ENCODE measurements at regions of chr22 and their contacts with region 1.

Region 1: DNA sequence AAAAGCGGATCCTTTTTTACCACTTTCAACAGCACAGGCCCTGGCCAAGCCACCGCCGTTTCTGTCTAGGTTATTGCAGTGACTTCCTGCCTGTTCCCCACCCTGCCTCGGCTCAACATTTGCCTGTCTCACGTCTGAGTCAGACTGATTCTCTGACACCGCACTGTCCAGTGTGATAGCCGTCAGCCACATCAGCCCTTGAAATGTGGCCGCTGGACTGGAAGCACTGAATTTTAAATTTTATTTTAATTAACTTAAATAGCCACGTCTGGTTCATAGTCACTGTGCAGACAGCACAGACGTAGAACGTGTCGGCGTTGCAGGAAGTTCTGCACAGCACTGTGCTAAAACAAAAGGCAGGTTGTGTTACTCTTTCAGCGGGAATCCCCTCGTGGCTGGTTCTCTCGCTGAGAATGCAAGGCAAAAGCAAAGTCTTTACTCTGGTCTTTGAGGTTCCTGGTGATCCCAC is 56.3 kb upstream of the ADSL start:
- DNase-seq: peak; percentile 49 to 90 (median 70)
- ATAC-seq: peak; percentile 85
- H3K4me3 ChIP-seq: peak overlapping the region; percentile 2
- H3K4me3 Mint-ChIP-seq: peak overlapping the region; percentile 70
- H3K27ac ChIP-seq: peak overlapping the region; percentile 83 to 94
- H3K27ac Mint-ChIP-seq: peak overlapping the region; percentile 98
- H3K4me1 ChIP-seq: peaks cover 44% of the 10 kb centered on the region
- H3K4me1 Mint-ChIP-seq: peaks cover 65% of the 10 kb centered on the region
- H3K27me3 ChIP-seq: no peaks in the 10 kb centered on the region
- H3K27me3 Mint-ChIP-seq: no peaks in the 10 kb centered on the region
- CTCF ChIP-seq: no peak

Region 2: DNA sequence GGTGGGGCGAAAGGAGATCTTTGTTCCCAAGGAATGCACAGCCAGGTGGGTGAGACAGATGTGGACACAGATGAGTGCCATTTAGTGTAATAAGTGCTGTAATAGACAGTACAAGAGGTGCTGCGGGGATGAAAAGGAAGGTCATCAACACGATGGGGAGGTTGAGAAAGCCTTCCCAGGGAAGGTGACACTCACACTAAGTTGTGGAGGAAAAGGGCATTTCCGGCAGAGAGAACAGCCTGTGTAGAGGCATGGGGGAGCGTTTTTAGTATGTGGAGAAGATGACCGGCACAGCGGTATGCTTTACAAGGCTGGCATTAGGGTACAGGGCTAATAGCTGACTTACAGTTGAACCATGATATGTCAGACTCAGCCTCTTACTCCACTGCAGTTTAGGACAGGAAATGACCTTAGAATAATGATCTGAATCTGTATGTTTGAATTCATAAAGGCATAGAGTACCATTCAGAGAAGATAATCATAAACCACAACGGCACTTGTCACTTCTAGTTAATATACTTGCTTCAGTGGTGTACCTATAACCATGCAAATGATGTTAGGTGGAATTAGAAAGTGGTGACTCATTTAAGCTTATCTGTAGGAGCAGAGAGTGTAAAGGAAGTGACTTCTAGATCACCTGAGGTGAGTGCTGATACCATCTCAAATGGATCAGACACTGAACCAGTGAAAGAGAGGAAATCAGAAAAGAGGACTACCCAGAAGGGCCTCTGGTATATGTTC is 234.7 kb before region 1 on chr22:
- CTCF ChIA-PET with region 1: no interaction called
- POLR2A ChIA-PET with region 1: interaction called, 3 read pairs
- intact Hi-C with region 1: loop called in 1 of 2 experiments (anchors 5 kb)
- DNase-seq: peak in 4 of 14 experiments; percentile 23 to 80 (median 74)
- ATAC-seq: peak; percentile 95
- H3K4me3 ChIP-seq: peak overlapping the region; percentile 17
- H3K4me3 Mint-ChIP-seq: peak overlapping the region; percentile 57
- H3K27ac ChIP-seq: peak overlapping the region; percentile 72 to 86
- H3K27ac Mint-ChIP-seq: peak overlapping the region; percentile 82
- H3K4me1 ChIP-seq: peaks cover 71% of the 10 kb centered on the region
- H3K4me1 Mint-ChIP-seq: peaks cover 82% of the 10 kb centered on the region
- H3K27me3 ChIP-seq: no peaks in the 10 kb centered on the region
- H3K27me3 Mint-ChIP-seq: no peaks in the 10 kb centered on the region
- CTCF ChIP-seq: no peak

Region 3: DNA sequence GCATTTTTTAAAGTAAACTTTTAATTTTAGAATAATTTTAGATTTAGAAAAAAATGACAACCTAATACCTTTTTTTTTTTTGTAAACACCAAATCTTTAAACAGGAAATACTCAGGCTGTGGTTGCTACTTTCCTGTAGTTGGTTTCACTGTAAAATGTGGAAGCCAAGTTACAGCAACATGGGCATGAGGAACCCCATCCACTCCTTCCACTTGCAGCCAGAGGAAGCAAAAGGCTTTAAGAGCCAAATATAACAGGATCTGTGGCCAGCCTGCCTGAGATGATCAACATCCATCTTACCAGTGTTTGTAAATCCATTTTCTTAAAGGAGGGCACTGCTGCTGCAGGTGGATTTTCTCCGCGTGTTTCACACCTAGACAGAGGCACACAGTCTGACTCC is 46.1 kb before region 1 on chr22:
- CTCF ChIA-PET with region 1: interaction called, 3 read pairs
- POLR2A ChIA-PET with region 1: interaction called, 3 read pairs
- intact Hi-C with region 1: loop called in 1 of 2 experiments (anchors 2 kb)
- DNase-seq: peak in 4 of 14 experiments; percentile 20 to 71 (median 57)
- ATAC-seq: no peak
- H3K4me3 ChIP-seq: peak overlapping the region; percentile 9
- H3K4me3 Mint-ChIP-seq: peak overlapping the region; percentile 80
- H3K27ac ChIP-seq: peak overlapping the region in 1 of 2 donors; percentile 18
- H3K27ac Mint-ChIP-seq: peak overlapping the region; percentile 86
- H3K4me1 ChIP-seq: peaks cover 82% of the 10 kb centered on the region
- H3K4me1 Mint-ChIP-seq: peaks cover 93% of the 10 kb centered on the region
- H3K27me3 ChIP-seq: no peaks in the 10 kb centered on the region
- H3K27me3 Mint-ChIP-seq: no peaks in the 10 kb centered on the region
- CTCF ChIP-seq: no peak

Region 4: GRCh38 chr22:40326905-40327735 is 37.1 kb after region 1 on chr22:
- CTCF ChIA-PET with region 1: interaction called, 4 read pairs
- POLR2A ChIA-PET with region 1: interaction called, 11 read pairs
- intact Hi-C with region 1: loop called (anchors 2 to 5 kb)
- DNase-seq: peak in 4 of 14 experiments; percentile 24 to 73 (median 45)
- ATAC-seq: peak; percentile 25
- H3K4me3 ChIP-seq: no peak overlapping the region
- H3K4me3 Mint-ChIP-seq: peak overlapping the region; percentile 75
- H3K27ac ChIP-seq: peak overlapping the region; percentile 52 to 71
- H3K27ac Mint-ChIP-seq: peak overlapping the region; percentile 97
- H3K4me1 ChIP-seq: peaks cover 65% of the 10 kb centered on the region
- H3K4me1 Mint-ChIP-seq: peaks cover 100% of the 10 kb centered on the region
- H3K27me3 ChIP-seq: no peaks in the 10 kb centered on the region
- H3K27me3 Mint-ChIP-seq: no peaks in the 10 kb centered on the region
- CTCF ChIP-seq: no peak

Region 5: DNA sequence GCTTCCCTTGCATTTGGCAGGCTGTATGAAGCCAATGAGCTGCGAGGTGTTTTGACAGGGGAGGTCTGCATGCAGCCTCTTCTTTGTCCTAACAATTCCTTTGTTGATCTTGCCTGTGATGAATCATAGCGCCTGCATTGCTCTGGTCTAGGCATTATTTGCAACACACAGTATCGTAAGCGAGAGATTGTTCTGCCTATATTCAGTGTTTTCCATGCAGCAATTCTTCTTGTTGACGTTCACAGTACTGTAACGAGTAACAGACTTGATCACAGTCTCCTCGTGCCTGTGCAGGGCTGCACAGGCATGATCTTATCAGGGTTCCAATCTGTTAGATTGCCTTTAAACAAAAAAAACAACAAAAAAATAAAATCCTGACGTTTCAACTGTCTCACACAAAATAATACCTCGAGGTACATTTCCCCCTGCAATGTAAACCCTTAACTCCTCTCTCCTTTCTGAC is 42.3 kb after region 1 on chr22:
- CTCF ChIA-PET with region 1: interaction called, 3 read pairs
- POLR2A ChIA-PET with region 1: interaction called, 5 read pairs
- intact Hi-C with region 1: loop called (anchors 2 to 5 kb)
- DNase-seq: peak in 4 of 14 experiments; percentile 30 to 48 (median 40)
- ATAC-seq: peak; percentile 74
- H3K4me3 ChIP-seq: no peak overlapping the region
- H3K4me3 Mint-ChIP-seq: peak overlapping the region; percentile 78
- H3K27ac ChIP-seq: peak overlapping the region in 1 of 2 donors; percentile 3
- H3K27ac Mint-ChIP-seq: peak overlapping the region; percentile 97
- H3K4me1 ChIP-seq: peaks cover 72% of the 10 kb centered on the region
- H3K4me1 Mint-ChIP-seq: peaks cover 96% of the 10 kb centered on the region
- H3K27me3 ChIP-seq: no peaks in the 10 kb centered on the region
- H3K27me3 Mint-ChIP-seq: no peaks in the 10 kb centered on the region
- CTCF ChIP-seq: no peak

Region 6: GRCh38 chr22:40385036-40385782 is 95.2 kb after region 1 on chr22:
- CTCF ChIA-PET with region 1: no interaction called
- POLR2A ChIA-PET with region 1: no interaction called
- intact Hi-C with region 1: no loop called
- DNase-seq: peak in 8 of 14 experiments; percentile 19 to 78 (median 44)
- ATAC-seq: peak; percentile 96
- H3K4me3 ChIP-seq: peak overlapping the region; percentile 37
- H3K4me3 Mint-ChIP-seq: peak overlapping the region; percentile 82
- H3K27ac ChIP-seq: peak overlapping the region; percentile 50 to 67
- H3K27ac Mint-ChIP-seq: peak overlapping the region; percentile 90
- H3K4me1 ChIP-seq: peaks cover 42% of the 10 kb centered on the region
- H3K4me1 Mint-ChIP-seq: peaks cover 65% of the 10 kb centered on the region
- H3K27me3 ChIP-seq: no peaks in the 10 kb centered on the region
- H3K27me3 Mint-ChIP-seq: no peaks in the 10 kb centered on the region
- CTCF ChIP-seq: no peak

Measured in CD4-positive, alpha-beta T cell (primary cell).